ENCODE measurements at regions of chr14 and their contacts with region 1.

Region 1: DNA sequence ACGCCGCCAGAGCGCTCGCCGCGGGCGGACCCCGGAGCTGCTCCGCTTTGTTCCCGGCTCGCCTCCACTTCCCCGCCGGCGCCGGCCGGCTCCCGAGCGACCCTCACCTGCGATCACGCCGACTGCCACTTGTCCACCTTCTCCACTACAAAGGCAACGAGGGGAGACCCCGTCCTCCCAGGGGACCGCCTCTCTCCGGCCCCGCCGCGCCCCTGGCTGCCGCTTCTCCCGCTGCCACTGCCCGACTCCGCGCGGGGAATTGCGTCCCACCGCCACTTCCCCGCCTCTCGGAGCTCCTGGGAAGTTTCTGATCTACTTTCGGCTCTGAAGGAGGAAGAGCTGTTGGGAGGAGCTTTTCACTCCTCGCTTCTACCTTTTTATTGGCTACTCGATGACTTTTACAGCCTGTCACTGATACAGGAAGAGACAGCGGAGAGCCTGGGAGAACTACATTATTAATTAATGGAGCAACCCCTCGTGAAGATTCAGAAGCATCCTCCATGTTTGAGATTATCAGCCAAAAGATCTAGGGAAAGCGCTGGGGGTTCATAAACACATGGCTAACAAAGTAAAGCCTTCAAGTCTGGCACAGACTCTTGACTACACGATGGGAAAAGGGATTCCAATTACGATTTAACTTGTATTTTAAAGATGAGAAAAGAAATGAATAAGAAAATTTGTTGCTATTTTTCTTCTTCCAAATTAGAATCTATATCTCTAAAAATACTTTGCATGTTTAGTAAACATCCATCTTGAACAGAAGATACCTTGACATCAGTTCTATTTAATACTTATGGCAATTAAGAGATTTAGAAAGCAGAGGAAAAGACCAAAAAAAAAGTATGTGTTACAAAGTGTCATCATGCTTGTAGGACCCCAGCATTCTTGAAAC is at the start of gene BAZ1A:
- DNase-seq: peak; percentile 76
- H3K4me3 ChIP-seq: peak within 1 kb of the TSS; percentile 70 to 99 (median 88)
- H3K27ac ChIP-seq: peak within 1 kb of the TSS; percentile 99 to 100 (median 99)
- H3K4me1 ChIP-seq: peaks cover 0 to 25% (median 13%) of the 10 kb centered on the region in 4 donors
- H3K27me3 ChIP-seq: no peaks in the 10 kb centered on the region
- CTCF ChIP-seq: peak; percentile 12 to 42 (median 28)
- EP300 ChIP-seq: no peak
- POLR2A ChIP-seq: peak; percentile 92
- total RNA-seq, gene BAZ1A: 25.8 to 48.1 (median 41.0) TPM

Region 2: GRCh38 chr14:34982417-34983147 is 107.3 kb after region 1 on chr14 and contains the start of gene SRP54:
- in situ Hi-C with region 1: loop called in 1 of 4 experiments (anchors 10 kb)
- intact Hi-C with region 1: loop called (anchors 10 kb)
- DNase-seq: peak; percentile 100
- H3K4me3 ChIP-seq: peak within 1 kb of the TSS; percentile 48 to 86 (median 66)
- H3K27ac ChIP-seq: peak within 1 kb of the TSS; percentile 88 to 99 (median 94)
- H3K4me1 ChIP-seq: peaks cover 5 to 43% (median 25%) of the 10 kb centered on the region in 4 donors
- H3K27me3 ChIP-seq: no peaks in the 10 kb centered on the region
- CTCF ChIP-seq: peak in 4 of 5 experiments; percentile 4 to 58 (median 24)
- EP300 ChIP-seq: no peak
- POLR2A ChIP-seq: peak; percentile 95
- total RNA-seq, gene SRP54: 14.7 to 63.4 (median 35.2) TPM

Region 3: GRCh38 chr14:35121887-35122695 is 246.8 kb after region 1 on chr14 and contains the starts of genes PPP2R3C and PRORP:
- in situ Hi-C with region 1: loop called in 1 of 4 experiments (anchors 10 kb)
- intact Hi-C with region 1: no loop called
- DNase-seq: peak; percentile 93
- H3K4me3 ChIP-seq: peak within 1 kb of the TSS; percentile 58 to 96 (median 61)
- H3K27ac ChIP-seq: peak within 1 kb of the TSS; percentile 92 to 99 (median 96)
- H3K4me1 ChIP-seq: peaks cover 5 to 51% (median 28%) of the 10 kb centered on the region in 4 donors
- H3K27me3 ChIP-seq: no peaks in the 10 kb centered on the region
- CTCF ChIP-seq: no peak
- EP300 ChIP-seq: peak; percentile 81
- POLR2A ChIP-seq: peak; percentile 59
- total RNA-seq, gene PPP2R3C: 13.5 to 26.5 (median 19.1) TPM
- total RNA-seq, gene PRORP: 23.2 to 46.0 (median 32.2) TPM

Measured in transverse colon (tissue), 4 donors.